ENCODE measurements at regions of chr3 and their contacts with region 1.

Region 1: DNA sequence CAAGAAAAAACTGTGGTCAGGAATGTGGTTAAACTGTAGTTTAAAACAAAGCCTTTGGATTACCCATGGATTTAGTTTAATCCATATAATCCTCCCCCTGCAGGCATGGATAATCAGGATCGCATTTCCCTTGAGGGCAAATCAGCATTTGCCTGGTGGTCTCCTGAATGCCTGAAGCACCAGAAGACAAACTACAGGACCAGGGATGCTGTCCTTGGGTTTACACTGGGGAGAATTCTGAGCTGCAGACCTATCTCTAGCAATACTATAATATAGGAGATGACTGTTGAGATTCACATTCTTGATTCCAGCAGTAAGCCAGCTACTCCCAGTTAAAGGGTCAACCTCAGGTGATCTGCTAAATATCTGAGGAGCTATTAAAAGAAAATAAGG is 10.6 kb downstream of the PIK3CB start:
- DNase-seq: no peak
- H3K4me3 ChIP-seq: no peak overlapping the region
- H3K27ac ChIP-seq: no peak overlapping the region
- H3K4me1 ChIP-seq: peaks cover 8% of the 10 kb centered on the region
- H3K27me3 ChIP-seq: no peaks in the 10 kb centered on the region
- CTCF ChIP-seq: no peak

Region 2: GRCh38 chr3:138915503-138916498 is 91.7 kb after region 1 on chr3:
- dilution Hi-C with region 1: loop called (anchors 25 kb)
- DNase-seq: no peak
- H3K4me3 ChIP-seq: peak overlapping the region; percentile 63 to 90 (median 72)
- H3K27ac ChIP-seq: peak overlapping the region; percentile 81
- H3K4me1 ChIP-seq: peaks cover 27% of the 10 kb centered on the region
- H3K27me3 ChIP-seq: no peaks in the 10 kb centered on the region
- CTCF ChIP-seq: peak; percentile 49 to 96 (median 79)

Measured in keratinocyte (primary cell).